ENCODE measurements at regions of chr18 and their contacts with region 1.

Region 1: GRCh38 chr18:5546660-5547059 is 2.9 kb upstream of the EPB41L3 start:
- DNase-seq: no peak
- ATAC-seq: no peak
- H3K4me3 ChIP-seq: no peak overlapping the region
- H3K27ac ChIP-seq: no peak overlapping the region
- H3K4me1 ChIP-seq: peaks cover 0 to 4% of the 10 kb centered on the region in 2 donors
- H3K27me3 ChIP-seq: peaks cover 0 to 11% (median 4%) of the 10 kb centered on the region in 3 donors
- CTCF ChIP-seq: no peak
- POLR2A ChIP-seq: no peak

Region 2: GRCh38 chr18:5424903-5425664 is 121.6 kb before region 1 on chr18:
- in situ Hi-C with region 1: loop called in 1 of 4 experiments (anchors 25 kb)
- intact Hi-C with region 1: no loop called
- DNase-seq: no peak
- ATAC-seq: no peak
- H3K4me3 ChIP-seq: no peak overlapping the region
- H3K27ac ChIP-seq: no peak overlapping the region
- H3K4me1 ChIP-seq: no peaks in the 10 kb centered on the region
- H3K27me3 ChIP-seq: no peaks in the 10 kb centered on the region
- CTCF ChIP-seq: peak in 1 of 5 experiments; percentile 37
- POLR2A ChIP-seq: no peak

Region 3: GRCh38 chr18:5630057-5630899 is 83.6 kb after region 1 on chr18:
- in situ Hi-C with region 1: loop called in 1 of 4 experiments (anchors 25 kb)
- intact Hi-C with region 1: no loop called
- DNase-seq: peak; percentile 23 to 44
- ATAC-seq: peak; percentile 50 to 73
- H3K4me3 ChIP-seq: peak overlapping the region; percentile 61 to 78 (median 66)
- H3K27ac ChIP-seq: peak overlapping the region in 3 of 4 donors; percentile 38 to 56 (median 43)
- H3K4me1 ChIP-seq: peaks cover 4 to 16% of the 10 kb centered on the region in 2 donors
- H3K27me3 ChIP-seq: peaks cover 9 to 28% (median 18%) of the 10 kb centered on the region in 3 donors
- CTCF ChIP-seq: no peak
- POLR2A ChIP-seq: peak; percentile 33 to 45

Region 4: DNA sequence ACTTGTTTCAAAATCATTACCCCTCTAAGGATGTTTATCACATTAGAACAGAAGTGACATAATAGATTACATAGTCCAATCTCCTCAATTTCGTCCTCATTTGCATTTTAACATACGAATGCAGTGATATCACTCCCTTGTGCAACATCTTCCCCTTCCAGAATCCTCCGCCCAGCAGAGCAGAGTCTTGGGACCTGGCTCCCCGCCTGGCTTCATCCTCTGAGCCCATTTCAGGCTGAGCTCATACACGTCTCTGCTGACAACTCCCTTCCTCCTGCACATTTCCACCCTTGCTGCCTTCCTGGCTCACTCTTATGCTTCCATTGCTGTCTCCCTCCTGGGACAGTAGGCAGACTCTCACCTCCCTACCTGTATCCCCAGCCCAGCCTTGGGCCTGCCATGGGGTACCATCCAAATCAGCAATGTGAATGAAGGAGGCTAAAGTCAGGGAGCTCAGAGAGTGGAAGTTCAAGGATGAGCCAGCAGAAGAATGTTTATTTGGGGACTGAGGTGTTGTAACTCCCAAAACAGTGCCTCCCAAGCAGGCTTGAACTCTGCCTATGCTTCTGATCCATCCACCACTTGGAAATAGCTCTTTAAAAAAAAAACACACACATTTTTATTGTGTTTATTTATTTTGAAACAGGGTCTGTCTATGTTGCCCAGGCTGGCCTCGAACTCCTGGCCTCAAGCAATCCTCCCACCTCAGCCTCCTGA is 183.5 kb after region 1 on chr18:
- in situ Hi-C with region 1: no loop called
- intact Hi-C with region 1: no loop called
- DNase-seq: peak; percentile 2 to 66
- ATAC-seq: peak; percentile 54 to 90
- H3K4me3 ChIP-seq: no peak overlapping the region
- H3K27ac ChIP-seq: no peak overlapping the region
- H3K4me1 ChIP-seq: no peaks in the 10 kb centered on the region
- H3K27me3 ChIP-seq: no peaks in the 10 kb centered on the region
- CTCF ChIP-seq: no peak
- POLR2A ChIP-seq: no peak

Measured in gastrocnemius medialis (tissue), 4 donors.